CD4-positive, alpha-beta memory T cell (primary cell): ENCODE measurements at regions of chr11 and their contacts with region 1.

Region 1: DNA sequence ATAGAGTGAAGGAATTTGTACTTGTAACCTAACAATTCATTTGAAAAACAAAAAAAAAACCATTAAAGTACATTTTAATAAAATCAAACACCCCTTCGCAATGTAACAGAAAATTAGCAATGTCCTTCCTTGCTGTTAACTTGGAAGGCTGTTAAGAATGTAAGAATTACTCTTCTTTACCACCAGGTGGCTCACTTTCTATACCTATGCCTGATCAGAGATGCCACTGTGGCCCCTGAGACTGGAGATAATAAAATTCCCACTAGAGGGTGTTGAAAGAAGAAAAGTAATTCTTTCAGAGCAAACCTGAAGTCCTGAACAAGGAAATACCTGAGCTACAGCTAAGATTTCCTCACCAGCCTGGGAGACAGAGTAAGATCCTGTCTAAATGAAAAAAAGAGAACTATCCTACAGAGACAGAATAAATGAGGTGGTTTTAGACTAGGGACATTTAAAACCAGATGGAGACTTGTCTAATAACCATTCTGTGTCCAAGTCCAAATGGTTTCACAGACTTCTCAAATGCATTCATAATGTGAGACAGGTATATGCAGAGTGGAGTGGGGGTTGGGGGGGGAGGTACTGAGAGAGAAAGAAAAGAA is 1089.3 kb downstream of the FAM181B start:
- DNase-seq: peak in 4 of 5 donors; percentile 28 to 36 (median 35)
- H3K4me3 ChIP-seq: no peak overlapping the region
- H3K4me3 Mint-ChIP-seq: no peak overlapping the region
- H3K27ac ChIP-seq: no peak overlapping the region
- H3K27ac Mint-ChIP-seq: no peak overlapping the region
- H3K4me1 ChIP-seq: no peaks in the 10 kb centered on the region
- H3K4me1 Mint-ChIP-seq: peaks cover 0 to 4% (median 1%) of the 10 kb centered on the region in 4 donors
- H3K27me3 ChIP-seq: no peaks in the 10 kb centered on the region
- H3K27me3 Mint-ChIP-seq: peaks cover 4 to 5% of the 10 kb centered on the region in 2 donors

Region 2: GRCh38 chr11:81963018-81963417 is 318.7 kb after region 1 on chr11:
- CTCF ChIA-PET with region 1: no interaction called
- POLR2A ChIA-PET with region 1: no interaction called
- intact Hi-C with region 1: loop called (anchors 1 kb)
- DNase-seq: peak in 1 of 5 donors; percentile 2
- H3K4me3 ChIP-seq: no peak overlapping the region
- H3K4me3 Mint-ChIP-seq: peak overlapping the region in 4 of 8 donors; percentile 7 to 45 (median 30)
- H3K27ac ChIP-seq: no peak overlapping the region
- H3K27ac Mint-ChIP-seq: peak overlapping the region in 1 of 7 donors; percentile 42
- H3K4me1 ChIP-seq: peaks cover 8% of the 10 kb centered on the region
- H3K4me1 Mint-ChIP-seq: peaks cover 5 to 19% (median 12%) of the 10 kb centered on the region in 4 donors
- H3K27me3 ChIP-seq: no peaks in the 10 kb centered on the region
- H3K27me3 Mint-ChIP-seq: no peaks in the 10 kb centered on the region

Region 3: DNA sequence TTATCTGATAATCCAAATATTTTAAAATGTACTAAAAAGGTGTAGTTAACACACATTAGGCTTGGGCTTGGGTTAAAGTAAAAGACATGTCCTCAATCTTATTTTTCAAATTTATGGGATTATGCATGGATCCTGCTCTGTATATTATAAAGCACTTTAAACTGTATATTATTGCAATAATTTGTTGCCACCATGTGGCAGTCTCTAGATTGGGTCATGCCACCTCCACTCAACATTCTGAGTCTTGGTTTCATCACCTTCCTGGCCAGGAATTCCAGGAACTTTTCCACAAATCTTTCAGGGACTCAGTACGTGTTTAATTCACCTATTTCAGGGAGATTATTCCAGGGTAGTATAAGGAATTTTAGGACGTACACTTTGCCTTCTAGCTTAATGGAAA is 393.8 kb after region 1 on chr11:
- CTCF ChIA-PET with region 1: interaction called, 3 read pairs
- POLR2A ChIA-PET with region 1: no interaction called
- intact Hi-C with region 1: loop called (anchors 1 kb)
- DNase-seq: no peak
- H3K4me3 ChIP-seq: no peak overlapping the region
- H3K4me3 Mint-ChIP-seq: no peak overlapping the region
- H3K27ac ChIP-seq: no peak overlapping the region
- H3K27ac Mint-ChIP-seq: no peak overlapping the region
- H3K4me1 ChIP-seq: no peaks in the 10 kb centered on the region
- H3K4me1 Mint-ChIP-seq: no peaks in the 10 kb centered on the region
- H3K27me3 ChIP-seq: no peaks in the 10 kb centered on the region
- H3K27me3 Mint-ChIP-seq: no peaks in the 10 kb centered on the region

Region 4: DNA sequence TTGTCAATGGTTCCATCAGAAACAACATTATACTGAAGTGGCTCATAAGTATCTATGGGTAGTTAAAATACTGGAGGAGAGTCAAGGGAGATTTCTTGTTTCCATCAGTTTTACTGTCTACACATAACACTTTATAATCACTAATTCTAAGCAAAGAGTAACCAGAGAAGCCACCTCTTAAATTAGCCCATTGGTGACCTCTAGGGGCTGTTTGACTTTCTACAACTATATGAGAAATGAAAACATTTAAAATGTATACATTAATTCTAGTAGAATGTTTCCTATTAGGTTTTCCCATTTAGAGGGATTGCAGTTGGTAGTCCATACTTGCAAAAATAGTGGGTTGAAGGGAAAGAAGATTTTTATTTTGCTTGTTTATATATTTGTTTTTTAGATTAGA is 585.0 kb after region 1 on chr11:
- CTCF ChIA-PET with region 1: interaction called, 4 read pairs
- POLR2A ChIA-PET with region 1: no interaction called
- intact Hi-C with region 1: loop called (anchors 1 kb)
- DNase-seq: peak in 3 of 5 donors; percentile 6 to 12 (median 8)
- H3K4me3 ChIP-seq: no peak overlapping the region
- H3K4me3 Mint-ChIP-seq: no peak overlapping the region
- H3K27ac ChIP-seq: no peak overlapping the region
- H3K27ac Mint-ChIP-seq: no peak overlapping the region
- H3K4me1 ChIP-seq: no peaks in the 10 kb centered on the region
- H3K4me1 Mint-ChIP-seq: no peaks in the 10 kb centered on the region
- H3K27me3 ChIP-seq: no peaks in the 10 kb centered on the region
- H3K27me3 Mint-ChIP-seq: no peaks in the 10 kb centered on the region

Region 5: GRCh38 chr11:82701847-82702520 is 1057.6 kb after region 1 on chr11:
- CTCF ChIA-PET with region 1: no interaction called
- POLR2A ChIA-PET with region 1: no interaction called
- intact Hi-C with region 1: loop called (anchors 2 kb)
- DNase-seq: no peak
- H3K4me3 ChIP-seq: no peak overlapping the region
- H3K4me3 Mint-ChIP-seq: no peak overlapping the region
- H3K27ac ChIP-seq: no peak overlapping the region
- H3K27ac Mint-ChIP-seq: no peak overlapping the region
- H3K4me1 ChIP-seq: no peaks in the 10 kb centered on the region
- H3K4me1 Mint-ChIP-seq: no peaks in the 10 kb centered on the region
- H3K27me3 ChIP-seq: no peaks in the 10 kb centered on the region
- H3K27me3 Mint-ChIP-seq: peaks cover 4 to 9% of the 10 kb centered on the region in 2 donors